ENCODE measurements at regions of chr18 and their contacts with region 1.

Region 1: GRCh38 chr18:77919923-77920322 is 670.3 kb downstream of the GALR1 start:
- DNase-seq: no peak
- ATAC-seq: no peak
- H3K4me3 ChIP-seq: no peak overlapping the region
- H3K27ac ChIP-seq: no peak overlapping the region
- H3K4me1 ChIP-seq: no peaks in the 10 kb centered on the region
- H3K27me3 ChIP-seq: peaks cover 0 to 8% (median 0%) of the 10 kb centered on the region in 9 donors
- CTCF ChIP-seq: no peak
- POLR2A ChIP-seq: no peak

Region 2: DNA sequence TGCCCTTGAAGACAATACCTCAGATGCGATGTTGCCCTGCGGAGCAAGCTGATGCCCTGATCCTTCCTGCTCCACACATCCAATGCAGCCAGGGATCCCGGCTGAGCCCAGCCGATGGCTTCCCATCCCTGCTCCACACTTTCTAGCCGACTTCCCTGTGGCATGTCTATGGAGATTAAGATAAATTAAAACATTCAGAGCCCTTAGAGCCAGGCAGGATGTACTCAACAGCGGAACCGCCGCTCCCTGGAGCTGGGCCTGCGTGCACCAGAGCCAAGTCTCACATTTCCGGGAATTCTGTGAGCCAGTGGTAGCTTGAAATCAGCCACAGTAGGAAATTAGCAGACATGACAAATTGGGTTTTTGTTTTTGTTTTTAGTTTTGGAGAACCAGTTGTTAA is 49.7 kb before region 1 on chr18:
- intact Hi-C with region 1: loop called in 1 of 10 experiments (anchors 5 kb)
- DNase-seq: peak in 2 of 5 donors; percentile 40 to 50
- ATAC-seq: peak in 3 of 4 donors; percentile 47 to 81 (median 59)
- H3K4me3 ChIP-seq: no peak overlapping the region
- H3K27ac ChIP-seq: peak overlapping the region in 6 of 12 donors; percentile 18 to 67 (median 40)
- H3K4me1 ChIP-seq: peaks cover 0 to 4% (median 0%) of the 10 kb centered on the region in 12 donors
- H3K27me3 ChIP-seq: no peaks in the 10 kb centered on the region
- CTCF ChIP-seq: no peak
- POLR2A ChIP-seq: no peak

Region 3: GRCh38 chr18:78017869-78018268 is 97.9 kb after region 1 on chr18:
- intact Hi-C with region 1: no loop called
- DNase-seq: no peak
- ATAC-seq: no peak
- H3K4me3 ChIP-seq: no peak overlapping the region
- H3K27ac ChIP-seq: no peak overlapping the region
- H3K4me1 ChIP-seq: no peaks in the 10 kb centered on the region
- H3K27me3 ChIP-seq: peaks cover 0 to 9% (median 0%) of the 10 kb centered on the region in 9 donors
- CTCF ChIP-seq: no peak
- POLR2A ChIP-seq: no peak